PC-9 (cell line): ENCODE measurements at regions of chr19 and their contacts with region 1.

Region 1: DNA sequence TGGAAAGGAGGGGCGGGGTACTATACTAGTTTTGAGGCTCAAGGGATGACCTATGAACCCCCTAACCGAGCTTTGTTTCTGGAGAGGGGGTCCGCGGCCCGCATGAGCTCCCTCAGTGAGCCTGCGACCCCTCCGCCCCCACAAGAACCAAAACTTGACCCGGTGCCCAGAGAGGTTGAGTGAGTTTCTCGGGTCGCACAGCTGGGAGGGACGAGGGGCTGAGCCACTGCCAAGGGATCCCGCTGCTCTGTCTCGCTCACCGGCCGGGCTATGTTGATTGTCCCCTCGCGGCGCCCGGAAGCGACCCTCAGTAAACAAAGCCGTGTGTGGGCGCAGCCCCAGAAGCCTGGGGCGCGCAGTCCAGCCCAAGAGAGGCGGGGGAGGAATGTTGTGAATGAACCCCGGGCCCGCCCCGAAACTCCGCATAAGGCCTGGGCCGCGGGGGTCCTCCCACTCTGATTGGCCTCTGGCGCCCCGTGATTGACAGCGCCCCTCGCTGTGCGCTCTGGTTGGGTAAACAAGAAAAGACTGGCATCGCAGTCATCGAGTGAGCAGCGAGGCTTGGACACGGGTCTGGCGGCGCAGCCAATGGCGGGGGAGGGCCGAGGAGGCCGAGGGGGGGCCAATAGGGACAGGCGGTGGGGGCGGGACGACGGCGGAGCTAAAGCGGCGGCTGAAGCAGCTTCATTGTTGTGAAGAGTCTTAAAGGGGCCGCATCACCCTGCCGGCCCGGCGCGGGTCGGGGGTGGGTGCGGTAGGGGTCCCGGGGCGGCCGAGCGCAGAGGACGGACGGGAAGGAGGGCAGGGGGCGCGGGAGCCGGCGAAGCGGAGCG is at the start of gene ZSWIM4:
- DNase-seq: peak; percentile 98 to 99
- H3K4me3 ChIP-seq: peak within 1 kb of the TSS; percentile 99
- H3K27ac ChIP-seq: peak within 1 kb of the TSS; percentile 94
- H3K4me1 ChIP-seq: peaks cover 33% of the 10 kb centered on the region
- H3K27me3 ChIP-seq: no peaks in the 10 kb centered on the region
- CTCF ChIP-seq: 0 out of 2 replicates have a peak, but pooled peaks have one; percentile 6
- total RNA-seq, gene ZSWIM4: 15.2 and 15.8 TPM in 2 replicates

Region 2: GRCh38 chr19:13644645-13645044 is 150.3 kb before region 1 on chr19:
- CTCF ChIA-PET with region 1: no interaction called
- POLR2A ChIA-PET with region 1: no interaction called
- intact Hi-C with region 1: no loop called
- DNase-seq: no peak
- H3K4me3 ChIP-seq: no peak overlapping the region
- H3K27ac ChIP-seq: no peak overlapping the region
- H3K4me1 ChIP-seq: no peaks in the 10 kb centered on the region
- H3K27me3 ChIP-seq: peaks cover 74% of the 10 kb centered on the region
- CTCF ChIP-seq: no peak

Region 3: GRCh38 chr19:13665125-13665905 is 129.7 kb before region 1 on chr19:
- CTCF ChIA-PET with region 1: no interaction called
- POLR2A ChIA-PET with region 1: no interaction called
- intact Hi-C with region 1: no loop called
- DNase-seq: no peak
- H3K4me3 ChIP-seq: no peak overlapping the region
- H3K27ac ChIP-seq: no peak overlapping the region
- H3K4me1 ChIP-seq: no peaks in the 10 kb centered on the region
- H3K27me3 ChIP-seq: peaks cover 77% of the 10 kb centered on the region
- CTCF ChIP-seq: no peak

Region 4: GRCh38 chr19:13764101-13764807 is 30.7 kb before region 1 on chr19 and contains the start of gene MRI1:
- CTCF ChIA-PET with region 1: no interaction called
- POLR2A ChIA-PET with region 1: interaction called, 3 read pairs
- intact Hi-C with region 1: loop called (anchors 2 kb)
- DNase-seq: peak in 1 of 2 experiments; percentile 72
- H3K4me3 ChIP-seq: peak within 1 kb of the TSS; percentile 61
- H3K27ac ChIP-seq: peak within 1 kb of the TSS; percentile 35; the same call in 1 of the 2 replicates
- H3K4me1 ChIP-seq: peaks cover 9% of the 10 kb centered on the region; the same call in 1 of the 2 replicates
- H3K27me3 ChIP-seq: no peaks in the 10 kb centered on the region
- CTCF ChIP-seq: no peak
- total RNA-seq, gene MRI1: 30.1 and 33.8 TPM in 2 replicates

Region 5: GRCh38 chr19:13784731-13785452 is 10.1 kb before region 1 on chr19:
- CTCF ChIA-PET with region 1: interaction called, 13 read pairs
- POLR2A ChIA-PET with region 1: interaction called, 17 read pairs
- intact Hi-C with region 1: no loop called
- DNase-seq: peak; percentile 55 to 71
- H3K4me3 ChIP-seq: no peak overlapping the region
- H3K27ac ChIP-seq: peak overlapping the region; percentile 24; the same call in 1 of the 2 replicates
- H3K4me1 ChIP-seq: peaks cover 27% of the 10 kb centered on the region
- H3K27me3 ChIP-seq: no peaks in the 10 kb centered on the region
- CTCF ChIP-seq: peak; percentile 86

Region 6: DNA sequence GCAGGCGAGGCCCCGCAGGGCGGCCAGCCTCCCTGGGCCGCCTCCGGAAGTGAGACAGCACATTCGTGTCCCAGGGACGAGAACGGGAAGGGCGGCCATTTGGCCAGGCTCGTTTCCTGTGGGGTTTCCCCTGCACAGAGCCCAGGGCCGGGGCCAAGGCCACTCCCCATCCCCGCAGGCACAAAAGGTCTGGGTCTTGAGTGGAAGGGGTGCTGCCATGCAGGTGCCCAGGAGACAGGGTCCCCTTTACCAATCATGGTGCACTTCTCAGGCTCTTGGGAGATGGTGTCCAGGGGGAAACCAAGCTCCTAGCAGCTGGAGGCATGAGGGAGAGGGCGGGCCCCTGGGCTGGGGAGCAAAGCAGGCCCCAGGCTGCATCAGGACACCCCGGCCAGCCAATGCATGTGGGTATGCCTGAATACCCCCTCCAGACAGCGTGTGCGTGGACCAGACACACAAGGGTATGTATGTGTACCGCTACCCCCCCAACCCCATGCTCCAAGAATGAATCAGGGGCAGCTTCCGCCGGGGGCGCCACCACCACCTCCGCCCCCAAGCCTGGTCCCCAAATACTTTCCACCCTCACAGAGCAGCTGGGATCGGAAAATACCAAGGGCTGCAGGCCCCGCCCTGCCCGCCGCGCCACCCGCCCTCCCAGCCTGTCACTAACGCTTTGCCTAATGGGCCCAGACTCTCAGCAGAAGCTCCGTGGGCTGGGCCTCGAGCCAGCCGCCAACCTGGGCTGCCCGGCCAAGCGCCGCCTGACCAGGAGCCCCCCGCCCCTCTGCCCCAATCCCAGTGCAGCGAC is 44.4 kb after region 1 on chr19:
- CTCF ChIA-PET with region 1: interaction called, 3 read pairs
- POLR2A ChIA-PET with region 1: interaction called, 18 read pairs
- intact Hi-C with region 1: loop called (anchors 2 kb)
- DNase-seq: peak; percentile 86 to 89
- H3K4me3 ChIP-seq: peak overlapping the region; percentile 61
- H3K27ac ChIP-seq: peak overlapping the region; percentile 97
- H3K4me1 ChIP-seq: peaks cover 72% of the 10 kb centered on the region
- H3K27me3 ChIP-seq: no peaks in the 10 kb centered on the region
- CTCF ChIP-seq: no peak

Region 7: GRCh38 chr19:14189415-14189814 is 394.4 kb after region 1 on chr19:
- CTCF ChIA-PET with region 1: no interaction called
- POLR2A ChIA-PET with region 1: no interaction called
- intact Hi-C with region 1: no loop called
- DNase-seq: no peak
- H3K4me3 ChIP-seq: no peak overlapping the region
- H3K27ac ChIP-seq: no peak overlapping the region
- H3K4me1 ChIP-seq: no peaks in the 10 kb centered on the region
- H3K27me3 ChIP-seq: no peaks in the 10 kb centered on the region
- CTCF ChIP-seq: no peak

Region 8: DNA sequence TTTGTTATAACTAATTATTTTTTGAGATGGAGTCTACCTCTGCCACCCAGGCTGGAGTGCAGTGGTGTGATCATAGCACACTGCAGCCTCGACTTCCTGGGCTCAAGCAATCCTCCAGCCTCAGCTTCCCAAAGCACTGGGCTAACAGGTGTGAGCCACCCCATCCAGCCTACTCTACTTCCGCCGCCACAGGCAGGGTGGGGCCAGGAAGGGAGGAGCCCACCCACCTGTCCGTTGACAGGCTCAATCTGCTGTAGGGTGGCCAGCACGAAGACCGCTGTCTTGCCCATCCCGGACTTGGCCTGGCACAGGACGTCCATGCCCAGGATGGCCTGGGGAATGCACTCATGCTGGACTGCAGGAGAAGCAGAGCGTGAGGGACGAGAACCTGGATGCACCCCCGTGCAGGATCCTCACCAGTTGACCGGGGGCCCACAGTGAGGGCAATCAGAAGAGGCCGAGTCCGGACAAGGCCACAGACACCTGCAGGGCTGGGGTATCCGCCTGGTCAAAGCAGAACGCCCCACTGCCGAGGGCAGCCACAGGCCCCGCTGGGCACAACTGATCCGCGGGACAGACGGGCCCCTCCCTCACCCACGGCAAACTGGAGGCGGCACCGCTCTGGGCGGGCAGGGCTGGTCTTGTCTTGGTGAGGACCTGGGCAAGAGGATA is 617.5 kb after region 1 on chr19:
- CTCF ChIA-PET with region 1: no interaction called
- POLR2A ChIA-PET with region 1: interaction called, 10 read pairs
- intact Hi-C with region 1: no loop called
- DNase-seq: no peak
- H3K4me3 ChIP-seq: no peak overlapping the region
- H3K27ac ChIP-seq: no peak overlapping the region
- H3K4me1 ChIP-seq: peaks cover 15% of the 10 kb centered on the region
- H3K27me3 ChIP-seq: no peaks in the 10 kb centered on the region
- CTCF ChIP-seq: no peak